ENCODE measurements at regions of chr3 and their contacts with region 1.

Region 1: DNA sequence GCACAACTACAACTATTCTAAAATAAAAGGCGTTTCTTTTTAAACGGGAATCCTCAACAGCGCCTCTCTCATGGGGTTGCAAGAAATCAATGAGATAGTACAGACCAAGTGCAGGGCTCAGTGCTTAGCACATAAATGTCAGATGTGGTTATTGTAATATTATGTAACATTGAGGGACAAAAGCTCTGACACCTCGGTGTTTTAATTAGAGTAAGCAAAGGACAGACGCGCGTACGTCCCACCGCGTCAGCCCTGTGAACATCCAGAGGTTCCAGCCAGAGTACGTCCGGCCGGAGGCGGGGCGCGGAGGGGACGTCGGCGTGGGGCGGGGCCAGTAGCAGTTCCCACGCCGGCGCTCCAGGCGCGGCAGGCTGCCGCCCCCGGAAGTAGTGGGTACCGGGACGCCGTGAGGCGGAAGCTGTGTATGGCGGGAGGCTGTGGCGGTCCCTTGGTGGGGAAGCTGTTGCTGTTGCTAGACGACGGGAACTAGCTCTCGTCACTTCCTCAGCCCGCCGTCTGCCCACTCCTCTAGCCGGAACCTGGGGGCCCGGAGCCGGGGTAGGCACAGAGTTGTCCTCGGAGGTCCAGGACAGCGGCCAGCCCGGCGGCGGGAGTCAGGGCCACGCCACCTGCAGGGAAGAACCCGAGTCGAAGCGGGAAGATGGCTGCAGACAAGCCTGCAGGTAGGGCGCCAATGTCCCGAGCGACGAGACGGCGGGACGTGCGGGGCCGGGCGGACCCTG is at the start of gene CNOT10:
- DNase-seq: peak; percentile 97 to 98 (median 98)
- H3K4me3 ChIP-seq: peak within 1 kb of the TSS; percentile 79 to 93 (median 88)
- H3K4me3 Mint-ChIP-seq: peak within 1 kb of the TSS; percentile 88 to 94
- H3K27ac ChIP-seq: peak within 1 kb of the TSS; percentile 79 to 92
- H3K27ac Mint-ChIP-seq: peak within 1 kb of the TSS; percentile 92 to 97 (median 96)
- H3K4me1 ChIP-seq: peaks cover 21 to 25% of the 10 kb centered on the region in 2 donors
- H3K4me1 Mint-ChIP-seq: peaks cover 26% of the 10 kb centered on the region
- H3K27me3 ChIP-seq: no peaks in the 10 kb centered on the region
- H3K27me3 Mint-ChIP-seq: no peaks in the 10 kb centered on the region
- CTCF ChIP-seq: peak; percentile 6
- polyA plus RNA-seq, gene CNOT10: 17.9 to 21.5 (median 19.6) TPM

Region 2: DNA sequence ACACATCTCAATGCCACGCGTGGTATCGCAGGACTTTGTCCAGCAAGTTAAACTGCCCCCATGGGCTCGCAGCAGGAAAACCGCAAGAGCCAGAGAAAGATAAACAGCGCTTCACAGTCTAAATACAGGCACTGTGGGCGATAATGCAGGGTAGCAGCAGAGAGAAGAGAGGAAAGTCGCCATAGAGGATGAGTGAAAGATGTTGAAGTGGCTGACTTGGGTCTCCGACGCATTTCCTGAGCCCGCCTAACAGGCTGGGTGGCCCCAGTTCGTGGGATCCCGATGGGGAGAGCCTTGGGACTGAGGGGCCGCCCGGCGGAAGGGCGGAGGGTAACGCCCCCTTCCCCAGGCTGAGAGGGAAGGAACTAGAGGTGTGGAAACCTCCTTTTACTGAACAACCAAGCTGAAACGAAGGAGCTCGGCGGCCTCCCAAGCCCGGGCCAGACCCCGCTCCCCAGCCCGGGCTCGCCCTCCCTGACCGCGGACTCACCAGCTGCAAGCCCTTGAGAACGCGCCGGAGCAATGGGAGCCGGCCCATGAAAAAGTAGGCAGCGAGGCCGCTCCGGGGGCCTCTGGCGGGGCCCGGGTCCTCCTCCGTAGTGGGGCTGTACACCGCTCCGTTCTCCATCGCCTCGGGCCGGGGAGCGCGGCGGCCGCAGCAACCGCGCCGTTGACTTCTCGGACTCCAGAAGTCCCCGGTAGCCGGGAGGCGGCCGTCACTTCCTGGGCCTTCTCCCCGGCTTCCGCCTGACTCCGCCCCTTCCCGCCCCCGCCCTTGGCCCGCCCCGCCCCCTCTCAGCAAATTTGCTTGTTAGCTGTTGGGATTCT is 182.6 kb before region 1 on chr3 and contains the start of gene CMTM6:
- intact Hi-C with region 1: loop called in 1 of 2 experiments (anchors 10 kb)
- DNase-seq: peak; percentile 75 to 85 (median 84)
- H3K4me3 ChIP-seq: peak within 1 kb of the TSS; percentile 91 to 97 (median 94)
- H3K4me3 Mint-ChIP-seq: peak within 1 kb of the TSS; percentile 94 to 95
- H3K27ac ChIP-seq: peak within 1 kb of the TSS; percentile 96 to 98
- H3K27ac Mint-ChIP-seq: peak within 1 kb of the TSS; percentile 95 to 99 (median 97)
- H3K4me1 ChIP-seq: peaks cover 42 to 46% of the 10 kb centered on the region in 2 donors
- H3K4me1 Mint-ChIP-seq: peaks cover 44% of the 10 kb centered on the region
- H3K27me3 ChIP-seq: no peaks in the 10 kb centered on the region
- H3K27me3 Mint-ChIP-seq: no peaks in the 10 kb centered on the region
- CTCF ChIP-seq: no peak
- polyA plus RNA-seq, gene CMTM6: 40.0 to 210 (median 190) TPM

Region 3: GRCh38 chr3:32733631-32734229 is 48.8 kb after region 1 on chr3:
- intact Hi-C with region 1: no loop called
- DNase-seq: peak; percentile 6 to 19 (median 18)
- H3K4me3 ChIP-seq: no peak overlapping the region
- H3K4me3 Mint-ChIP-seq: no peak overlapping the region
- H3K27ac ChIP-seq: no peak overlapping the region
- H3K27ac Mint-ChIP-seq: no peak overlapping the region
- H3K4me1 ChIP-seq: no peaks in the 10 kb centered on the region
- H3K4me1 Mint-ChIP-seq: no peaks in the 10 kb centered on the region
- H3K27me3 ChIP-seq: no peaks in the 10 kb centered on the region
- H3K27me3 Mint-ChIP-seq: peaks cover 0 to 1% (median 0%) of the 10 kb centered on the region in 3 donors
- CTCF ChIP-seq: peak; percentile 79

Measured in CD14-positive monocyte (primary cell).